ENCODE measurements at regions of chr10 and their contacts with region 1.

Region 1: GRCh38 chr10:71396084-71396720 is 518 bp upstream of the CDH23 start:
- DNase-seq: peak; percentile 40 to 90
- H3K4me3 ChIP-seq: peak overlapping the region; percentile 53 to 61 (median 56)
- H3K27ac ChIP-seq: peak overlapping the region in 1 of 5 donors; percentile 75
- H3K4me1 ChIP-seq: peaks cover 17 to 24% (median 23%) of the 10 kb centered on the region in 4 donors
- H3K27me3 ChIP-seq: peaks cover 5 to 74% (median 52%) of the 10 kb centered on the region in 3 donors
- CTCF ChIP-seq: peak in 3 of 7 experiments; percentile 20 to 38 (median 24)
- EP300 ChIP-seq: no peak
- POLR2A ChIP-seq: no peak

Region 2: GRCh38 chr10:71270301-71271220 is 125.6 kb before region 1 on chr10:
- intact Hi-C with region 1: no loop called
- DNase-seq: peak; percentile 63 to 87
- H3K4me3 ChIP-seq: no peak overlapping the region
- H3K27ac ChIP-seq: peak overlapping the region in 1 of 5 donors; percentile 35
- H3K4me1 ChIP-seq: peaks cover 10 to 50% (median 38%) of the 10 kb centered on the region in 4 donors
- H3K27me3 ChIP-seq: no peaks in the 10 kb centered on the region
- CTCF ChIP-seq: peak in 4 of 7 experiments; percentile 9 to 67 (median 55)
- EP300 ChIP-seq: no peak
- POLR2A ChIP-seq: no peak

Region 3: GRCh38 chr10:71708301-71708703 is 312.1 kb after region 1 on chr10:
- intact Hi-C with region 1: loop called (anchors 10 kb)
- DNase-seq: peak; percentile 62 to 81
- H3K4me3 ChIP-seq: no peak overlapping the region
- H3K27ac ChIP-seq: no peak overlapping the region
- H3K4me1 ChIP-seq: peaks cover 8 to 28% (median 17%) of the 10 kb centered on the region in 4 donors
- H3K27me3 ChIP-seq: peaks cover 0 to 3% (median 0%) of the 10 kb centered on the region in 3 donors
- CTCF ChIP-seq: peak in 5 of 7 experiments; percentile 61 to 86 (median 69)
- EP300 ChIP-seq: no peak
- POLR2A ChIP-seq: no peak